ENCODE measurements at regions of chr17 and their contacts with region 1.

Region 1: DNA sequence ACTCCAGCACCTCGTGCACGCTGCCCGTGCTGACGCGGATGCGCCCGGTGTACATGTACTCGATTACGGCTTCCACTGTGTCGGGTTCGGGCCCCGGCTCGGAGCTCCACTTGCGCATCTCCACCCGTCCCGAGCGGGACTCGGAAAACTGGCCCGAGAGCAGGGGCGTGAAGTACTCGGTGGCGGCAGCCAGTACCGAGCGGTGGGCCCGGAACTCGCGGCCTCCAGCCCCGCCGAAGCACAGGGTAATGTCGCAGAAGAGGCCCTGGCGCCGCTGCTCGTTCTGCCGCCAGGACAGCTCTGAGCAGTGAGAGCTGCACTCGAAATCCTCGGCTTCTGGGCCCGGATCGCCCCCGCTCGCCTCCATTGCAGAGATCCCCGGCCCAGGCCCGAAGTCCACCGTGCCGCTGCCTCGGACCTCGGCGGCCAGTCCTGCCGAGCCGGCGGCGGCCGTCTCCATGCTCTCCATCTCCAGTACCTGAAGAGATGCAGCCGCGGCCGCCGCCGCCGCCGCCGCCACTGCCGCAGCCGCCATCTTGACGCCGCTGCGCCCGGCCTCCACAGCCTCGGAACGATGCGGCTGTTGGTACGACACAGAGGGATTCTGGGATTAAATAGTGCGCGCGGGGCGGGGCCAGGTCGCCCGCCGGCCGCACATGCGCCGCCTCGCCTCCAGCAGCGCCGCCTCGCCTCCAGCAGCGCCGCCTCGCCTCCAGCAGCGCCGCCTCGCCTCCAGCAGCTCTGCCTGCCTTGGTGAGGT is at the start of gene KLHL11:
- DNase-seq: peak; percentile 78 to 88 (median 86)
- ATAC-seq: peak; percentile 97
- H3K4me3 ChIP-seq: peak within 1 kb of the TSS; percentile 89
- H3K4me3 Mint-ChIP-seq: no peak within 1 kb of the TSS
- H3K27ac ChIP-seq: peak within 1 kb of the TSS; percentile 90
- H3K27ac Mint-ChIP-seq: peak within 1 kb of the TSS in 4 of 9 donors; percentile 73 to 92 (median 90)
- H3K4me1 ChIP-seq: peaks cover 25 to 31% of the 10 kb centered on the region in 2 donors
- H3K4me1 Mint-ChIP-seq: peaks cover 15 to 43% (median 32%) of the 10 kb centered on the region in 7 donors
- H3K27me3 ChIP-seq: no peaks in the 10 kb centered on the region
- H3K27me3 Mint-ChIP-seq: no peaks in the 10 kb centered on the region
- total RNA-seq, gene KLHL11: 15.2 to 25.9 (median 18.9) TPM

Region 2: DNA sequence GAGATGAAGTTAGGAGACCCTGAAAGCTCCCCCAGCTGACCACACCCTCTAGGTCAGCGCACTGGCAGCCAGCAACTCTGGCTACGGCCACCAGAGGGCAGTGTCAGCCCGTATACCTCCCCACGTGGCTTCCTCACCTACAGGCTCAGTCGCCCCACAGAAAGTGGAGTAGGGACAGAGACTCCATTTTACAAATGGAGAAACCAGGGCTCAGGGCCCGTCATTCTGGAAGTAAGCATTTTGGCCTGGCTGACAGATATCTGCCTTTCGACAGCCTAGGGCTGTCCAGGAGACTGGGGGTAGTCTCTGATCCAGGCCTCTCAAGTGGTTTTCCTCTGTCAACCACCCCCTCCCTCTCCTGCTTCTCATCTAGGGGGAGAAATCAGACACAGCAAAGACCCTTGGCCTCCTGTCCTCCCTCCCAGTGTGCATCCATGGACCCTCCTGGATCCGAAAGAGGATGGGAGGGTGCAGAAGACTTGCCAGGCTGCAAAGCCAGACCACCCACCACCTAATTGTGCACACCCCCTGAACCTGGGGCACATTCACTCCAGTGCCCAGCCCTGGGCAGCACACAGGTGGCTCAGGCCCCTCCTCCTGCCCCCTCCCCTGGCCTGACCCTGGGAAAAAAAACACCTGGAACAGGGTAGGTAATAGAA is 126.8 kb before region 1 on chr17:
- CTCF ChIA-PET with region 1: no interaction called
- POLR2A ChIA-PET with region 1: no interaction called
- intact Hi-C with region 1: loop called in 1 of 2 experiments (anchors 10 kb)
- DNase-seq: peak; percentile 61 to 83 (median 74)
- ATAC-seq: peak; percentile 97
- H3K4me3 ChIP-seq: no peak overlapping the region
- H3K4me3 Mint-ChIP-seq: no peak overlapping the region
- H3K27ac ChIP-seq: no peak overlapping the region
- H3K27ac Mint-ChIP-seq: peak overlapping the region in 1 of 9 donors; percentile 39
- H3K4me1 ChIP-seq: peaks cover 0 to 13% of the 10 kb centered on the region in 2 donors
- H3K4me1 Mint-ChIP-seq: peaks cover 4 to 12% (median 7%) of the 10 kb centered on the region in 7 donors
- H3K27me3 ChIP-seq: peaks cover 3 to 7% of the 10 kb centered on the region in 2 donors
- H3K27me3 Mint-ChIP-seq: peaks cover 32 to 38% (median 38%) of the 10 kb centered on the region in 5 donors

Region 3: DNA sequence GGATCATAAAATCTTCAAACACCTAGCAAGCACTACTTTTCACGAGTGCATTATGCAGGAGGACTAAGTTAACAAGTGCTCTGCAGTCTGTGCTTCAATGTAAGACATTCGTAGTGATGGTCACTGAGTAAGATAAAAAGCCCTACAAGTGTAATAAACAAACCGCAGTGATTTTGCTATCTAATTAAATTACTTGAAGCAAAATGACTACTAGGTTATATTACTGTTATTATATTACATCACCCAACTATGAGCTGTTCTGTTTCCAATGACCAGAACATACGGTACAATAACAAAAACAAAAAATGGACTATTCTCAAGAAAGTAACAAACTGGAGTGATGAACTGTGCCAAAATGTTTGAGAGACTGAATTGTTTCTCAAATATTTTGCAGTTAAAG is 16.2 kb before region 1 on chr17:
- CTCF ChIA-PET with region 1: interaction called, 4 read pairs
- POLR2A ChIA-PET with region 1: interaction called, 12 read pairs
- intact Hi-C with region 1: no loop called
- DNase-seq: no peak
- ATAC-seq: no peak
- H3K4me3 ChIP-seq: no peak overlapping the region
- H3K4me3 Mint-ChIP-seq: no peak overlapping the region
- H3K27ac ChIP-seq: no peak overlapping the region
- H3K27ac Mint-ChIP-seq: no peak overlapping the region
- H3K4me1 ChIP-seq: peaks cover 0 to 3% of the 10 kb centered on the region in 2 donors
- H3K4me1 Mint-ChIP-seq: peaks cover 16 to 50% (median 35%) of the 10 kb centered on the region in 7 donors
- H3K27me3 ChIP-seq: no peaks in the 10 kb centered on the region
- H3K27me3 Mint-ChIP-seq: no peaks in the 10 kb centered on the region

Region 4: DNA sequence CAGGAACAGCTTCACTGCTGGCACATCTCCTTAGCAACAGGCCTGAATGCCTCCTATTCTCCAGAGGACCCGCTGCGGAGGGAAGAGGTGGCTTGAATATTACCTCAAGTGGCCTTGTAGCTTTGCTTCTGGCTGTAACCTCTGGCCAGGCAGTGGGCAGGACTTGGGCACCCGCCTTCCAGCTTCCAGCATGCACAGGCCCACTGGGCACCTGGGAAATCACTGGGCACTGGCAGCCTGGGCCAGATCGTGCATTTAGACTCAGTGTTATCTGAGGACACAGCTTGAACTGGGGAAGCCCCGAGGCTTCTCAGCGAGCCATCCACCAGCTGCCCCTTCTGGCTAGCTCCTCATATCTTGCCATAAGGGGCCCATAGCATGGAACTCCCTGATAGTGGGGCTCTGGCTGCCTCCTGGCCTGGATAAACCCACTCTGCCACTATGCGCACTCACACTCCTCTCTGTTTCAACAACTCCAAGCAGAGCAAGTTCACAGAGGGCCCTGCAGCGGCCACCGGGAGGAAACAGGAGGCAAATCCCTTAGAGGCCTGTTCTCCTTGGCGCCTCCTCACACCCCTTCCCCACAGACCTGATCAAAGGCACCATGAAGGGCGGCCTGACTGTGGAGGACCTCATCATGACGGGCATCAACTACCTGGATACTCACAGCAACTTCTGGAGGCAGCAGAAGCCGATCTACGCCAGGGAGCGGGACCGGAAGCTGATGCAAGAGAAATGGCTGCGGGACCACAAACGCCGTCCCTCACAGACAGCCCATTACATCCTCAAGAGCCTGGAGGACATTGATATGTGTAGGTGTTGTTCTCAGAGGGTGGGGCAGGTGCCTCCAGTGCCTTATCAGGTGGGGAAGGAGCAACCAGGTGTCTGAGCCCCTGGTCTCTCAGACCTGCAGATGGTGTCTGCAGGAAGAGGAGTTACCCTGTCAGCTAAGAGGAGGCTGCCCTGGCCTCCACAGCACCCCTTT is 73.2 kb after region 1 on chr17:
- CTCF ChIA-PET with region 1: no interaction called
- POLR2A ChIA-PET with region 1: no interaction called
- intact Hi-C with region 1: no loop called
- DNase-seq: no peak
- ATAC-seq: no peak
- H3K4me3 ChIP-seq: no peak overlapping the region
- H3K4me3 Mint-ChIP-seq: no peak overlapping the region
- H3K27ac ChIP-seq: no peak overlapping the region
- H3K27ac Mint-ChIP-seq: no peak overlapping the region
- H3K4me1 ChIP-seq: no peaks in the 10 kb centered on the region
- H3K4me1 Mint-ChIP-seq: peaks cover 0 to 5% (median 0%) of the 10 kb centered on the region in 7 donors
- H3K27me3 ChIP-seq: no peaks in the 10 kb centered on the region
- H3K27me3 Mint-ChIP-seq: peaks cover 0 to 12% (median 3%) of the 10 kb centered on the region in 5 donors

Region 5: DNA sequence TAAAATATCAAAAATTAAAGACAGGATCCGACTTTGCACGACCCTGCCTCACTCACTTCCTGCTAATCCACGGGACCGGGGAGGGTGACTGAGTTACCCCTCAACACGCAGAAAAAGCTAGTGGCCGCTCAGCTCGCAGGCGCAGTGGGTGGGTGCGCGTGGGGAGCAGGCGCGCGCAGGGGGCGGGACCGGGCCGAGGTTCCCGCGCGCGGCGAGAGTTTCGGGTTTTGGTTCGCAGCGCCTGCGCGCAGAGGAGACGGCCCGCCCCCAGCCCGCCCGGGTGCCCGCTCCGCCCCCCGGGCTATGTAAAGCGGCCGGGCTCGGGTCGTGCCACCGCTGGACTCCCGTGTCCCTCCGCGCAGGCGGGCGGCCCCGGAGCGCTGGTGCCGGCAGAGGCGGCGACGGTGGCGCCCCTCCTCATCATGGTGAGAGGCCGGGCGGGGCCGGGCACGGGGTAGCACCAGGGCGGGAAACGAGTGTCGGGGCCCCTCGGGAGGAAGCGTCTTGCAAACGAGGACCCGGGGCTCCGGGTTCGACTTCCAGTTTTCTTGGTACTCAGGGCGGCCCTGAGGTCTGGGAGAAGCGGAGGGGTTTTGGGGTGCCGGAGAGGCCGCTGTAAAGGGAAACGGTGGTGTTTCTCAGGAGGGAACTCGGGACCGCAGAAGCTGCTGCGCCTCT is 101.6 kb after region 1 on chr17 and contains the start of gene CNP:
- CTCF ChIA-PET with region 1: no interaction called
- POLR2A ChIA-PET with region 1: no interaction called
- intact Hi-C with region 1: loop called in 1 of 2 experiments (anchors 2 kb)
- DNase-seq: peak; percentile 84 to 94 (median 88)
- ATAC-seq: peak; percentile 94
- H3K4me3 ChIP-seq: peak within 1 kb of the TSS; percentile 87
- H3K4me3 Mint-ChIP-seq: peak within 1 kb of the TSS; percentile 78 to 93 (median 88)
- H3K27ac ChIP-seq: peak within 1 kb of the TSS; percentile 88
- H3K27ac Mint-ChIP-seq: peak within 1 kb of the TSS; percentile 83 to 96 (median 89)
- H3K4me1 ChIP-seq: peaks cover 10 to 16% of the 10 kb centered on the region in 2 donors
- H3K4me1 Mint-ChIP-seq: peaks cover 24 to 51% (median 36%) of the 10 kb centered on the region in 7 donors
- H3K27me3 ChIP-seq: no peaks in the 10 kb centered on the region
- H3K27me3 Mint-ChIP-seq: peaks cover 0 to 2% (median 0%) of the 10 kb centered on the region in 5 donors
- total RNA-seq, gene CNP: 29.6 to 86.3 (median 32.5) TPM

Region 6: GRCh38 chr17:42183741-42184711 is 319.0 kb after region 1 on chr17:
- CTCF ChIA-PET with region 1: no interaction called
- POLR2A ChIA-PET with region 1: interaction called, 3 read pairs
- intact Hi-C with region 1: loop called in 1 of 2 experiments (anchors 1 kb)
- DNase-seq: peak; percentile 54 to 92 (median 72)
- ATAC-seq: peak; percentile 78
- H3K4me3 ChIP-seq: peak overlapping the region; percentile 98
- H3K4me3 Mint-ChIP-seq: peak overlapping the region; percentile 85 to 95 (median 90)
- H3K27ac ChIP-seq: peak overlapping the region; percentile 81
- H3K27ac Mint-ChIP-seq: peak overlapping the region; percentile 69 to 94 (median 88)
- H3K4me1 ChIP-seq: peaks cover 15 to 38% of the 10 kb centered on the region in 2 donors
- H3K4me1 Mint-ChIP-seq: peaks cover 21 to 52% (median 41%) of the 10 kb centered on the region in 7 donors
- H3K27me3 ChIP-seq: no peaks in the 10 kb centered on the region
- H3K27me3 Mint-ChIP-seq: peaks cover 0 to 25% (median 8%) of the 10 kb centered on the region in 5 donors

Measured in naive thymus-derived CD4-positive, alpha-beta T cell (primary cell).